Activated CD4-positive, alpha-beta T cell treated with anti-CD3 and anti-CD28 coated beads for 36 hours (primary cell): ENCODE measurements at regions of chr12 and their contacts with region 1.

Region 1: GRCh38 chr12:1117970-1118563 is 127.0 kb downstream of the ERC1 start:
- DNase-seq: peak; percentile 82
- ATAC-seq: no peak
- H3K4me3 Mint-ChIP-seq: no peak overlapping the region
- H3K27ac Mint-ChIP-seq: no peak overlapping the region
- H3K4me1 Mint-ChIP-seq: peaks cover 18% of the 10 kb centered on the region
- H3K27me3 Mint-ChIP-seq: no peaks in the 10 kb centered on the region

Region 2: DNA sequence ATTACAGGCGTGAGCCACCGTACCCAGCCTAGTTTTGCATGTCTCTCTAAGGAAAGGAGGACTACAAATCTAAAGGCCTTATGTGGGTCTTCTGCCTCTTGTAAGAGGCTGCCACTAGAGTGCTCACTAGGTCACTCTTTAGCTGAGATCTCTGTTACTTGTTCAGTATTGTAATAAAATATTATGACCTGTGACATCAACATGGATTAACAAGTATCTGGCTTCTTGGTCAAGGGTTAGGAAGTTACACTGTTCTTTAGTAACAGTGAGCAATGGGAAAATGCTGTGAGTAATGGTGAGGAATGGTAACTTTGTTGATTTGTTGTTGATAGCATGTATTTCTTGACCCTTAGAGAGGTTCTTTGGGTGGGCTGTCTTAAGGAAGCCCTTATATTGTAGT is 76.6 kb before region 1 on chr12:
- CTCF ChIA-PET with region 1: no interaction called
- POLR2A ChIA-PET with region 1: no interaction called
- intact Hi-C with region 1: no loop called
- DNase-seq: no peak
- ATAC-seq: no peak
- H3K4me3 Mint-ChIP-seq: no peak overlapping the region
- H3K27ac Mint-ChIP-seq: no peak overlapping the region
- H3K4me1 Mint-ChIP-seq: peaks cover 4% of the 10 kb centered on the region
- H3K27me3 Mint-ChIP-seq: no peaks in the 10 kb centered on the region

Region 3: DNA sequence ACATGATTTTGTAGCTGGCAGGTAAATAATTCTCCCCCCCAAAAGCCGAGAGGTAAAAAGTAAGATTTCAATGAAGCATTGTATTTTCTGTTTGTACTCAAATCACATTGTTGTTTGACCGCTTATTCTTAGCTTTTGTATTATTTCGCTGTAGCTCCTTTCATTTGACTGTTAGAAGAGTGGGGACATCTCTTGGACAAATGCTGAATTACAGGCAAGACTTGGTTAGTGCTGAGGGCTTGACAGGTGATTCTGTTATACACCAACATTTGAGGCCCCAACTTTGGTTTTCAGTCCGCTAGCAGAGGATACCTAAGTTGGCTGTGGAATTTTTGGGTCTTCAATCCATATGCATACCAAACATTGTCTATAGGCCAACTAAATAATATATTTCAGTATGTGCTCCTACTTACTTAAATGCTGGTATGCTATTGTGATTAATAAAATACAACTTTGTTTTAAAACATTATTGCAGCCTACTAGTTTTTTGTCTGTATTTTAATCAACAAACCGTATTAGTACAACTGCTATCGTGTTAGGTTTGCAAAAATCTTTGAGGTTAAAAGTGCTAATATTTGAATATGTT is 24.8 kb before region 1 on chr12:
- CTCF ChIA-PET with region 1: interaction called, 95 read pairs
- POLR2A ChIA-PET with region 1: no interaction called
- intact Hi-C with region 1: no loop called
- DNase-seq: peak; percentile 46
- ATAC-seq: peak; percentile 71
- H3K4me3 Mint-ChIP-seq: no peak overlapping the region
- H3K27ac Mint-ChIP-seq: no peak overlapping the region
- H3K4me1 Mint-ChIP-seq: peaks cover 27% of the 10 kb centered on the region
- H3K27me3 Mint-ChIP-seq: no peaks in the 10 kb centered on the region

Region 4: GRCh38 chr12:1130164-1130563 is 12.1 kb after region 1 on chr12:
- CTCF ChIA-PET with region 1: interaction called, 28 read pairs
- POLR2A ChIA-PET with region 1: interaction called, 3 read pairs
- intact Hi-C with region 1: no loop called
- DNase-seq: no peak
- ATAC-seq: no peak
- H3K4me3 Mint-ChIP-seq: no peak overlapping the region
- H3K27ac Mint-ChIP-seq: no peak overlapping the region
- H3K4me1 Mint-ChIP-seq: peaks cover 33% of the 10 kb centered on the region
- H3K27me3 Mint-ChIP-seq: no peaks in the 10 kb centered on the region

Region 5: DNA sequence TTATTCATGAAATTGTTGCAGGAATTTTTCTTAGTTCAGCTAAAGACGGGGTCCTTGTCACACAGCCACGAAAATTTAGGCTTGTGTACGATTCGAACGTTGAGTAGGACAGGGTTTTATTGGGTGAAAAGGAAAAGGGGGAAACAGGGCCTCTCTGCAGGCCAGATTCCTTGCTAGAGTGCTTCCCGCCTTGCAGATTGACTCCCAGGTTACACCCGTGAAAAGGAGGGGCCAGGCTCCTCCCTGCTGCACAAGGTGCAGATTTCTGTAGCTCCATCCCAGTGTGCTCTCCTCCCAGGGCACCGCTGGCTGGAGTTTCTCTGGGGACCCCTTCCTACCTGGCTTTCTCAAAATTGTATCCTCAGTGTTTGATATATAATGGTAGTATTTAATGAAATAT is 94.5 kb after region 1 on chr12:
- CTCF ChIA-PET with region 1: interaction called, 12 read pairs
- POLR2A ChIA-PET with region 1: no interaction called
- intact Hi-C with region 1: no loop called
- DNase-seq: no peak
- ATAC-seq: no peak
- H3K4me3 Mint-ChIP-seq: no peak overlapping the region
- H3K27ac Mint-ChIP-seq: no peak overlapping the region
- H3K4me1 Mint-ChIP-seq: peaks cover 21% of the 10 kb centered on the region
- H3K27me3 Mint-ChIP-seq: no peaks in the 10 kb centered on the region

Region 6: DNA sequence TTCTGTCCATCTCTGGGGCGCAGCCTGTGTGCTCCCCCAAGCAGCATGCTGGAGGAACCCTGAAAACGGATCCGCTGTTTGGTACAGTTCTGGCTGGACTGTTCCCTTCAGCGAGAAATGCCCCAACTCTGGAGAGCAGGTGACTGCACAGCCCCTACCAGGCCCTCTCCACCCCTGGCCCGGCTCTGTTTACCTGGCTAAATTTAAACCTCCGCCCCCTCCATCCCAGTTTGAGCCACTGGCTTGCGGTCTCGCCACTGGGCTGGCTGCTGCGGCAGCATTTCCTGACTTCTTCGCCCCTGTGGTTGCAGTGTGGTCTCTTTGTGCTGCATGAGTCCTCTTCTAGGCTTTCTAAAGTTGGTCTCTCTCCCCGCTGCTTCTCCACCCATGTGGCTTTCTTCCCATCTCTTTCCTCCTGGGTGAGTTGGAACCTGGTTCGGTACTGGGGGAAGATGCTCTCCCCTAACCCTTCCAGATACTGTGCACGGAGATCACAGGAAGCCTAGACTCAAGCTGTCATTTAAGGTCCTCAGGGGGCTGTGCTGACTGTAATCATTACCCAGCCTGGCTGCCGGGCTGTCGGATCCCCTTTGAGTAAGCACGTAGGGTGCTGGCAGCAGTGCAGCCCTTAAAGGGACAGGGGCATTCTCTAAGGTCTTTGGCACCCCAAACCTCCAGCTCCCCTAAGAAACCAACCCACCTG is 415.7 kb after region 1 on chr12:
- CTCF ChIA-PET with region 1: interaction called, 10 read pairs
- POLR2A ChIA-PET with region 1: no interaction called
- intact Hi-C with region 1: loop called in 1 of 2 experiments (anchors 2 kb)
- DNase-seq: peak; percentile 77
- ATAC-seq: peak; percentile 85
- H3K4me3 Mint-ChIP-seq: peak overlapping the region; percentile 50
- H3K27ac Mint-ChIP-seq: no peak overlapping the region
- H3K4me1 Mint-ChIP-seq: peaks cover 32% of the 10 kb centered on the region
- H3K27me3 Mint-ChIP-seq: peaks cover 60% of the 10 kb centered on the region

Region 7: GRCh38 chr12:1576410-1577241 is 458.6 kb after region 1 on chr12:
- CTCF ChIA-PET with region 1: interaction called, 133 read pairs
- POLR2A ChIA-PET with region 1: no interaction called
- intact Hi-C with region 1: no loop called
- DNase-seq: no peak
- ATAC-seq: no peak
- H3K4me3 Mint-ChIP-seq: no peak overlapping the region
- H3K27ac Mint-ChIP-seq: no peak overlapping the region
- H3K4me1 Mint-ChIP-seq: no peaks in the 10 kb centered on the region
- H3K27me3 Mint-ChIP-seq: no peaks in the 10 kb centered on the region

Region 8: DNA sequence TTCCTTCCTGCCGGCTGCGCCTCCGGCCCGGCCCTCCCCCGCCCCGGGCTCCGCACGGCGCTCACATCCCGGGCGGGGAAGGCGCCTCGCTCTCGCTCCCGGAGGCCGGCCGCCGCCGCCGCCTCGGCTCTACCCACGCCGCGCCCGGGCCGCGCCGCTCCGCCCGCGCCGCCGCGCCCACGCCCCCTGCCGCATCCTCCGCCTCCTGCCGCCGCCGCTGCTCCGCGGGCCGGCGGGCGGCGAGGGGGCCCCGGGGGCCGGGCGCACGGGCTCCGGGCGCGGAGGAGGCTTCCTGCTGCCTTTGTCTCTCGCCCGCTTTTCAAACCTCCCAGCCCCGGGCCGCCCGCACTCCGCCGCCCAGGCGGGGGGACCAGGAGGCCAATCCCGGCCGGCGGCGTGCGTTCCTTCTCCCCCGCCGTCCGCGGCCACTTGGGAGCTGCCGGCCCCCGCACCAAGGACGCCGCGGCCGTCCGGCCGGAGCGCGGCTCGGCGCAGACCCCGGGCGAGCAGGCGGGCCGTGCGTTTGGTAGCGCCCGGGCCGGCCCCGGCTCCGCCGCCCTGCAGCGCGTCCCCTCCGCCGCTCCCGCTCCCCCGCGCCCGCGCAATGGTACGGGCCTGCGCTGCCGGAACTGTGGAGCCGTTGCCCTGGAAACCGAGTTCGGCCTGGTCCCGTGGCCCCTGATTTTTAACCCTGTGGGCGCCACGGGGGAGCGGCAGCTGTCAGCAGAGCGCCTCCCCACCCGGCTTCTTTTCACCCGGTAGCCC is 476.4 kb after region 1 on chr12 and contains the start of gene FBXL14:
- CTCF ChIA-PET with region 1: interaction called, 58 read pairs
- POLR2A ChIA-PET with region 1: no interaction called
- intact Hi-C with region 1: no loop called
- DNase-seq: peak; percentile 93
- ATAC-seq: peak; percentile 57
- H3K4me3 Mint-ChIP-seq: peak within 1 kb of the TSS; percentile 98
- H3K27ac Mint-ChIP-seq: peak within 1 kb of the TSS; percentile 93
- H3K4me1 Mint-ChIP-seq: peaks cover 38% of the 10 kb centered on the region
- H3K27me3 Mint-ChIP-seq: no peaks in the 10 kb centered on the region
- total RNA-seq, gene FBXL14: 17.0 to 17.8 TPM